ENCODE measurements at regions of chr3 and their contacts with region 1.

Region 1: GRCh38 chr3:88113311-88114162 is 36.2 kb upstream of the C3orf38 start:
- DNase-seq: peak; percentile 75
- ATAC-seq: peak; percentile 93
- H3K4me3 Mint-ChIP-seq: no peak overlapping the region
- H3K27ac Mint-ChIP-seq: no peak overlapping the region
- H3K4me1 Mint-ChIP-seq: peaks cover 17% of the 10 kb centered on the region
- H3K27me3 Mint-ChIP-seq: no peaks in the 10 kb centered on the region
- CTCF ChIP-seq: peak; percentile 86

Region 2: GRCh38 chr3:87792534-87793336 is 320.8 kb before region 1 on chr3:
- CTCF ChIA-PET with region 1: no interaction called
- POLR2A ChIA-PET with region 1: no interaction called
- intact Hi-C with region 1: loop called (anchors 10 kb)
- DNase-seq: no peak
- ATAC-seq: peak; percentile 56
- H3K4me3 Mint-ChIP-seq: peak within 1 kb of the TSS; percentile 58
- H3K27ac Mint-ChIP-seq: no peak within 1 kb of the TSS
- H3K4me1 Mint-ChIP-seq: peaks cover 29% of the 10 kb centered on the region
- H3K27me3 Mint-ChIP-seq: peaks cover 61% of the 10 kb centered on the region
- CTCF ChIP-seq: no peak

Region 3: DNA sequence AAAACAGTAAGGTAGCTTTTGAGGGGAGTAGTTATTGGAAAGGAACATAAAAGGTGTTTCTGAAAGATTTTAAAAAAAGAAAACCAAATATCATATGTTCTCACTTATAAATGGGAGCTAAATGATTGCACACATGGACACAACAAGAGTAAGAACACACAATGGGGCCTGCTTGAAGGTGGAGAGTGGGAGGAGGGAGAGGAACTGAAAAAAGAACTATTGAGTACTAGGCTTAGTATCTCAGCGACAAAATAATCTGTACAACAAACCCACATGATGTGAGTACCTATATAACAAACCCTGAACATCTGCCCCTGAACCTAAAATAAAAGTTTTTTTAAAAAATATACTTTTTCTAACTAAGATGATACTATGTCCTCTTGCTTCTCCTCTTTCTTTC is 193.0 kb before region 1 on chr3:
- CTCF ChIA-PET with region 1: no interaction called
- POLR2A ChIA-PET with region 1: no interaction called
- intact Hi-C with region 1: no loop called
- DNase-seq: no peak
- ATAC-seq: no peak
- H3K4me3 Mint-ChIP-seq: no peak overlapping the region
- H3K27ac Mint-ChIP-seq: no peak overlapping the region
- H3K4me1 Mint-ChIP-seq: no peaks in the 10 kb centered on the region
- H3K27me3 Mint-ChIP-seq: peaks cover 2% of the 10 kb centered on the region
- CTCF ChIP-seq: no peak

Region 4: GRCh38 chr3:88003115-88003755 is 110.3 kb before region 1 on chr3:
- CTCF ChIA-PET with region 1: interaction called, 4 read pairs
- POLR2A ChIA-PET with region 1: no interaction called
- intact Hi-C with region 1: loop called (anchors 10 kb)
- DNase-seq: no peak
- ATAC-seq: no peak
- H3K4me3 Mint-ChIP-seq: no peak overlapping the region
- H3K27ac Mint-ChIP-seq: no peak overlapping the region
- H3K4me1 Mint-ChIP-seq: peaks cover 3% of the 10 kb centered on the region
- H3K27me3 Mint-ChIP-seq: peaks cover 3% of the 10 kb centered on the region
- CTCF ChIP-seq: peak; percentile 85

Region 5: GRCh38 chr3:88058591-88059368 is 54.8 kb before region 1 on chr3 and contains the starts of genes CGGBP1 and ZNF654:
- CTCF ChIA-PET with region 1: interaction called, 12 read pairs
- POLR2A ChIA-PET with region 1: interaction called, 3 read pairs
- intact Hi-C with region 1: no loop called
- DNase-seq: peak; percentile 99
- ATAC-seq: peak; percentile 95
- H3K4me3 Mint-ChIP-seq: peak within 1 kb of the TSS; percentile 98
- H3K27ac Mint-ChIP-seq: peak within 1 kb of the TSS; percentile 97
- H3K4me1 Mint-ChIP-seq: peaks cover 50% of the 10 kb centered on the region
- H3K27me3 Mint-ChIP-seq: no peaks in the 10 kb centered on the region
- CTCF ChIP-seq: no peak
- total RNA-seq, gene CGGBP1: 69.2 to 74.6 TPM
- total RNA-seq, gene ZNF654: 20.2 to 21.0 TPM

Region 6: GRCh38 chr3:88090681-88091080 is 22.9 kb before region 1 on chr3:
- CTCF ChIA-PET with region 1: interaction called, 15 read pairs
- POLR2A ChIA-PET with region 1: no interaction called
- intact Hi-C with region 1: no loop called
- DNase-seq: no peak
- ATAC-seq: no peak
- H3K4me3 Mint-ChIP-seq: no peak overlapping the region
- H3K27ac Mint-ChIP-seq: no peak overlapping the region
- H3K4me1 Mint-ChIP-seq: peaks cover 7% of the 10 kb centered on the region
- H3K27me3 Mint-ChIP-seq: no peaks in the 10 kb centered on the region
- CTCF ChIP-seq: no peak

Region 7: DNA sequence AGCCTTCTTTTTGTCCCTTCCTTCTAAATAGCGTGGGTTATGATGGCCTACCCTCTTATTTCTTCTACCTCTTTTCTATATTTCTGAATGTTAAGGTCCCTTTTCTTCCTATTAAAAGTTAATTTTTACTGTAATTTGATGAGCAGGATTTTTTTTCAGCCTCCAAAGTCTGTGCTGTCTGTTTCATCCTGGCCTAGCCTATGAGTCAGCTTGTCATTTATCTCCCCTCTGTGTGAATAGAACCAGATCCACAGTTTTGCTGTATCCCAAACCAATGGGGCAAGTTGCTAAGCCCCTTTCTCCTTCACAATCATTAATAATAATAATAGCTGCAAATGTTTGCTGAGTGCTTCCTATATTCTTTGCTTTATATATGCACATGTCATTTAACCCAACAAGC is 18.2 kb after region 1 on chr3:
- CTCF ChIA-PET with region 1: interaction called, 19 read pairs
- POLR2A ChIA-PET with region 1: no interaction called
- intact Hi-C with region 1: no loop called
- DNase-seq: no peak
- ATAC-seq: no peak
- H3K4me3 Mint-ChIP-seq: no peak overlapping the region
- H3K27ac Mint-ChIP-seq: no peak overlapping the region
- H3K4me1 Mint-ChIP-seq: peaks cover 14% of the 10 kb centered on the region
- H3K27me3 Mint-ChIP-seq: no peaks in the 10 kb centered on the region
- CTCF ChIP-seq: no peak

Region 8: DNA sequence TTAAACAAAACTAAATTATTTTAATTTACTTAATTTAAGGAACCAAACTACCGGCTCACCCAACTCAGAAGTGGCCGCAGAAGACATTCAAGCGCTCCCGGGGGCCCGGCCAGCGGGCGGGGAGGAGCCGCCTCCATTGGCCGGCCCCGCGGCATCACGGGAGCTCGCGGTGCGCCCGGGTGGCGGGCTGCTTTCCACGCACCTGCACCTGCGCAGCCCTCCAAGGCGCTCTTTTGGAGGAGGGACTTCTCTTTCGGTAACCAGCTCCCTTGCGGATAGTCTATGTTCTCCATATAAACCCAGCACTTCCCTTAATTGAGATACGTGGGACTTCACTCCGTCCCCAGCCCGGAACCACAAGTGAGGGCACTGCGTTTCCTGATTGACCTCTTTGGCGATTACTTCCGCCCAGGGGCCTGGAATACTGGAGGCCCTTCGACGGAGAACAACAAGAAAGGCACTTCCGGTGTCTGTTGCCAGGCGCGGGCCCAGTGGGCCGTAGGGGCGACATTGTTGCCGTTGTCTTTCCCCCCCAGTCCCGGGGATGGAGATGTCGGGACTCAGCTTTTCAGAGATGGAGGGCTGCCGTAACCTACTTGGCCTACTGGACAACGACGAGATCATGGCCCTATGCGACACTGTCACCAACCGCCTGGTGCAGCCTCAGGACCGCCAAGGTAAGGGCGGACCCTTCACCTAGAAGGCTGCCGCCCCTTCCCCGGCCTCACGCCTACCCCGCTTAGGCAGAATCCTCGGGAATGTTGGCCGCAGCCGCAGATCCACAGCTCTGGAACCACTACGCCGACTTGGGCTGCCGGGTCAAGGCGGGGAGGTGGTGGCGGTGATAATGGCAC is 36.2 kb after region 1 on chr3 and contains the start of gene C3orf38:
- CTCF ChIA-PET with region 1: interaction called, 12 read pairs
- POLR2A ChIA-PET with region 1: interaction called, 3 read pairs
- intact Hi-C with region 1: no loop called
- DNase-seq: peak; percentile 81
- ATAC-seq: peak; percentile 88
- H3K4me3 Mint-ChIP-seq: peak within 1 kb of the TSS; percentile 94
- H3K27ac Mint-ChIP-seq: peak within 1 kb of the TSS; percentile 99
- H3K4me1 Mint-ChIP-seq: peaks cover 32% of the 10 kb centered on the region
- H3K27me3 Mint-ChIP-seq: peaks cover 1% of the 10 kb centered on the region
- CTCF ChIP-seq: no peak
- total RNA-seq, gene C3orf38: 17.8 to 19.0 TPM